Left ventricle myocardium inferior (tissue), 1 donor: ENCODE measurements at regions of chr17 and their contacts with region 1.

Region 1: GRCh38 chr17:52846325-52846724 is 687.8 kb upstream of the CA10 start:
- DNase-seq: no peak
- H3K4me3 ChIP-seq: no peak overlapping the region
- H3K27ac ChIP-seq: no peak overlapping the region
- H3K4me1 ChIP-seq: no peaks in the 10 kb centered on the region
- H3K27me3 ChIP-seq: no peaks in the 10 kb centered on the region
- CTCF ChIP-seq: no peak

Region 2: GRCh38 chr17:52677991-52678620 is 168.2 kb before region 1 on chr17:
- intact Hi-C with region 1: no loop called
- DNase-seq: no peak
- H3K4me3 ChIP-seq: no peak overlapping the region
- H3K27ac ChIP-seq: no peak overlapping the region
- H3K4me1 ChIP-seq: no peaks in the 10 kb centered on the region
- H3K27me3 ChIP-seq: no peaks in the 10 kb centered on the region
- CTCF ChIP-seq: no peak

Region 3: GRCh38 chr17:52923658-52924057 is 77.3 kb after region 1 on chr17:
- intact Hi-C with region 1: loop called (anchors 10 kb)
- DNase-seq: no peak
- H3K4me3 ChIP-seq: no peak overlapping the region
- H3K27ac ChIP-seq: no peak overlapping the region
- H3K4me1 ChIP-seq: no peaks in the 10 kb centered on the region
- H3K27me3 ChIP-seq: no peaks in the 10 kb centered on the region
- CTCF ChIP-seq: no peak

Region 4: DNA sequence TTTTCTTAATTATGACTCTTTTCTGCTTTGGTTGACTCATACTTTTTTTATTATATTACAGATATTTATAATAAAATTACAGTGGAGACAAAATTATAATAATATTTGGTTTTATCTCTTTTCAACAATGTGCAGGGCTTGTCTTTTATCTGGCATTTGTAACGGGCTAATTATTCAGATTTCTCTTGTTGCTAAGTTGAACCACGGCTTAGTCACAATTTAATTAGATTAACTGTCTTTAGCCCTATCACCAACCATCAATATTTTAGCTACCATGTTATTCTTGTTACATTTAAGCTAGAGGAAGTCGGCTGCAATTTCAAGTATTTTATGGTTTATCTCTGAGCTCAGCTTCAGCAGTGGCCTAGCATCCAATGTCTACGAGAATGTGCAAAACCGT is 111.1 kb after region 1 on chr17:
- intact Hi-C with region 1: no loop called
- DNase-seq: no peak
- H3K4me3 ChIP-seq: no peak overlapping the region
- H3K27ac ChIP-seq: no peak overlapping the region
- H3K4me1 ChIP-seq: no peaks in the 10 kb centered on the region
- H3K27me3 ChIP-seq: no peaks in the 10 kb centered on the region
- CTCF ChIP-seq: no peak